MCF 10A (cell line): ENCODE measurements at regions of chr5 and their contacts with region 1.

Region 1: GRCh38 chr5:157253547-157253946 is 12.4 kb upstream of the CYFIP2 start:
- DNase-seq: peak; percentile 79
- H3K4me3 Mint-ChIP-seq: no peak overlapping the region
- H3K27ac Mint-ChIP-seq: no peak overlapping the region
- H3K4me1 Mint-ChIP-seq: no peaks in the 10 kb centered on the region
- H3K27me3 Mint-ChIP-seq: no peaks in the 10 kb centered on the region
- CTCF ChIP-seq: peak; percentile 96

Region 2: DNA sequence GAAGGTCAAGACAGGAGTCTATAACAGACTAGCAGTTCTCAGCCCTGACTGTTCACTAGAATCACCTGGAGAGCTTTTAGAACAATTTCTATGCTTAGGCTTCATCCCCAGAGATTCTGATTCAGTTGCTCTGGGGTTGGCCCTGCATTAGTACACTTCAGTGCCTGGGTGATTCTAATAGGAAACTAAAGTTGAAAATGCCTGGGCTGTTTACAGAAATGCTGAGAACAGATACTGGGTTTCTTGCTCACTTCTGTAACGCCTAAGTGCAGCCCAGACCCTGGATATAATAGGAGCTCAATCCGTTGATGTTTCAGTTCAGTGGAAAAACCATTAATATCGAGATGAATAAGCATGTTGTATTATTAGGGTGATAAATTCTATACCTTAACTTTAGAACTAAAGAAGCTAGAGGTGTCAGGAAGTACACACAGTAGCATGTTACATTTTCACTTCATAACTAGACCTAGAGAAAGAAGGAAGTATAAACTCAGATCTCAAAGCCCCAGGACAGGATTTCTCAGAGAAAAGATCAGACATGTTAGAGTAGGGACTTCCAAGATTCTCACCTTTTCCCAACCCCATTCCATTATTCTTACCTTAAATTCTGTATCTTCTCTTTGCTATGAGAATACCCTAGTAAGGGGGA is 165.1 kb before region 1 on chr5:
- CTCF ChIA-PET with region 1: no interaction called
- POLR2A ChIA-PET with region 1: no interaction called
- intact Hi-C with region 1: no loop called
- DNase-seq: no peak
- H3K4me3 Mint-ChIP-seq: no peak overlapping the region
- H3K27ac Mint-ChIP-seq: no peak overlapping the region
- H3K4me1 Mint-ChIP-seq: no peaks in the 10 kb centered on the region
- H3K27me3 Mint-ChIP-seq: no peaks in the 10 kb centered on the region
- CTCF ChIP-seq: no peak

Region 3: GRCh38 chr5:157148734-157149615 is 104.6 kb before region 1 on chr5:
- CTCF ChIA-PET with region 1: interaction called, 56 read pairs
- POLR2A ChIA-PET with region 1: no interaction called
- intact Hi-C with region 1: loop called (anchors 1 kb)
- DNase-seq: peak; percentile 81
- H3K4me3 Mint-ChIP-seq: no peak overlapping the region
- H3K27ac Mint-ChIP-seq: no peak overlapping the region
- H3K4me1 Mint-ChIP-seq: peaks cover 6% of the 10 kb centered on the region
- H3K27me3 Mint-ChIP-seq: no peaks in the 10 kb centered on the region
- CTCF ChIP-seq: peak; percentile 90

Region 4: GRCh38 chr5:157271740-157272271 is 18.3 kb after region 1 on chr5:
- CTCF ChIA-PET with region 1: interaction called, 20 read pairs
- POLR2A ChIA-PET with region 1: no interaction called
- intact Hi-C with region 1: no loop called
- DNase-seq: no peak
- H3K4me3 Mint-ChIP-seq: no peak overlapping the region
- H3K27ac Mint-ChIP-seq: no peak overlapping the region
- H3K4me1 Mint-ChIP-seq: peaks cover 25% of the 10 kb centered on the region
- H3K27me3 Mint-ChIP-seq: no peaks in the 10 kb centered on the region
- CTCF ChIP-seq: no peak

Region 5: DNA sequence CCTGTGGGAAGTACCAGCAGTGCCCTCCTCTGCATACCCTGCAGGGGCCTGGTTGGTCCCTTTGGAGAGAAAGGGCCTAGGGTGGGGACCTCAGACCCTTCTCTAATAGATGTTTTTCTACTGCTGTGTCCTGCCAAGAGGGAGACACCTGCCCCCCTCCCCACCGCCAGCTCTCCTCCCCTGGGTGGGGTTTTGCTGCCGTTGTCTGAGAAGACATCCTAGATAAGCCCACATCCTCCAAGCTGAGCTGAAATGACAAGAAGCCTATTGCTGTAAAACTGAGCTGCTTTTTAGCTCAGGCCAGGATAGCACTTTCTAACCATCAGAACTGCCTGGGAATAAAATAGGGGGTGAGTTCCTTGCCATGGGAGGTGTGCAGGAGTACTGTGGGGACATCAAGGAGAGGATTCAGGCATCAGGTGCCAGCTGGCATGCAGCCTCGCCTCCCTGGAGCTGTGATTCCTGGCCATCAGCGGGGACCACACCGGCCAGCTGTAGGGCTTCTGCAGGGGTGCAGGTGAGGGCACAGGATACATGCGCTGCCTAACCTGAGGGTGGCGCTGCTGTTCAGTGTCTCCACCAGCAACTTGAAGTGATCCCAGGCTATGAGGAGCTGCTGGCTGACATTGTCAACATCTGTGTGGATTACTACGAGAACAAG is 50.2 kb after region 1 on chr5:
- CTCF ChIA-PET with region 1: interaction called, 101 read pairs
- POLR2A ChIA-PET with region 1: no interaction called
- intact Hi-C with region 1: no loop called
- DNase-seq: no peak
- H3K4me3 Mint-ChIP-seq: no peak overlapping the region
- H3K27ac Mint-ChIP-seq: no peak overlapping the region
- H3K4me1 Mint-ChIP-seq: no peaks in the 10 kb centered on the region
- H3K27me3 Mint-ChIP-seq: no peaks in the 10 kb centered on the region
- CTCF ChIP-seq: peak; percentile 7

Region 6: DNA sequence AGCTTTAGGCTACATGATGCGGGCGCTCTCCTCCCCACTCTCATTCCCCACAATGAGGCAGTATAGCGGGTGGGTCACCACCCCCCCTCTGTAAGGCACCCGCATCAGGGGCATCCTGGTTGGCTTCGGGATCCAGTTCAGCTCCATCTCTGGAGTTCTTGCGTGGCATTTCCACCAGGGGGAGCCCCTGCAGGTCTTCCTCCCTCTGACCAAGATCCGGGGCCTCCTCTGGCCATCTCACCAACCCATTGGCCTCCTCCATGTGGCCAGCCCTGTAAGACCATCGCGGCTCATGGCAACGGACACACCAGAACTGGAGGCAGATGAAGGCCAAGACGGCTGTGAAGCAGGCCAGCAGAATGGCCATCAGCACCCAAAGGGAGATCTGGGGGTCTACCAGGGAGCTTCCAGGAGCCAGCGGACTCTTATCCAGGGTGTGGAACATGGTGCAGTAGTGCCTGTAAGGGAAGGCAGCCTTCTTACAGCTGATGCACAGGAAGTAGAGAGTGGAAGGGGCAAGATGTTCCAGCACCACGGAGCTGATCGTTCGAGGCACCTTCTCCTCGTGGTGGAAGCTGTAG is 89.4 kb after region 1 on chr5:
- CTCF ChIA-PET with region 1: interaction called, 20 read pairs
- POLR2A ChIA-PET with region 1: no interaction called
- intact Hi-C with region 1: no loop called
- DNase-seq: peak; percentile 66
- H3K4me3 Mint-ChIP-seq: no peak overlapping the region
- H3K27ac Mint-ChIP-seq: no peak overlapping the region
- H3K4me1 Mint-ChIP-seq: no peaks in the 10 kb centered on the region
- H3K27me3 Mint-ChIP-seq: no peaks in the 10 kb centered on the region
- CTCF ChIP-seq: peak; percentile 82

Region 7: GRCh38 chr5:157592594-157592993 is 339.0 kb after region 1 on chr5:
- CTCF ChIA-PET with region 1: no interaction called
- POLR2A ChIA-PET with region 1: no interaction called
- intact Hi-C with region 1: no loop called
- DNase-seq: no peak
- H3K4me3 Mint-ChIP-seq: no peak overlapping the region
- H3K27ac Mint-ChIP-seq: no peak overlapping the region
- H3K4me1 Mint-ChIP-seq: no peaks in the 10 kb centered on the region
- H3K27me3 Mint-ChIP-seq: no peaks in the 10 kb centered on the region
- CTCF ChIP-seq: no peak

Region 8: DNA sequence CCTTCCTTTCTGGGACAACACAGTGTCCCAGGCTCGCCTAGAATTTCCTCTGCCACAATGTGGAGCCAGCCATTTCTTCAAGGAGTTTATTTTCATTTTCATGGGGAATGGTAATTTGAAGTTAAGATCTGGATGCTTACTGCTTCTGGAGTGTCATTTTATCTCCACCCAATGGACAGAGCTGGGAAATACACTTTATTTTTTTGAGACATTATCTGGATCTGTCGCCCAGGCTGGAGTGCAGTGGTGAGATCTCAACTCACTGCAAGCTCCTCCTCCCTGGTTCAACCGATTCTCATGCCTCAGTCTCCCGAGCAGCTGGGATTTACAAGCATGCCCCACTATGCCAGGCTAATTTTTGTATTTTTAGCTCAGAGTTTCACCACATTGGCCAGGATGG is 465.0 kb after region 1 on chr5:
- CTCF ChIA-PET with region 1: interaction called, 7 read pairs
- POLR2A ChIA-PET with region 1: no interaction called
- intact Hi-C with region 1: loop called (anchors 5 kb)
- DNase-seq: peak; percentile 69
- H3K4me3 Mint-ChIP-seq: no peak overlapping the region
- H3K27ac Mint-ChIP-seq: no peak overlapping the region
- H3K4me1 Mint-ChIP-seq: no peaks in the 10 kb centered on the region
- H3K27me3 Mint-ChIP-seq: no peaks in the 10 kb centered on the region
- CTCF ChIP-seq: peak; percentile 83